Psoas muscle (tissue), 8 donors: ENCODE measurements at regions of chr10 and their contacts with region 1.

Region 1: DNA sequence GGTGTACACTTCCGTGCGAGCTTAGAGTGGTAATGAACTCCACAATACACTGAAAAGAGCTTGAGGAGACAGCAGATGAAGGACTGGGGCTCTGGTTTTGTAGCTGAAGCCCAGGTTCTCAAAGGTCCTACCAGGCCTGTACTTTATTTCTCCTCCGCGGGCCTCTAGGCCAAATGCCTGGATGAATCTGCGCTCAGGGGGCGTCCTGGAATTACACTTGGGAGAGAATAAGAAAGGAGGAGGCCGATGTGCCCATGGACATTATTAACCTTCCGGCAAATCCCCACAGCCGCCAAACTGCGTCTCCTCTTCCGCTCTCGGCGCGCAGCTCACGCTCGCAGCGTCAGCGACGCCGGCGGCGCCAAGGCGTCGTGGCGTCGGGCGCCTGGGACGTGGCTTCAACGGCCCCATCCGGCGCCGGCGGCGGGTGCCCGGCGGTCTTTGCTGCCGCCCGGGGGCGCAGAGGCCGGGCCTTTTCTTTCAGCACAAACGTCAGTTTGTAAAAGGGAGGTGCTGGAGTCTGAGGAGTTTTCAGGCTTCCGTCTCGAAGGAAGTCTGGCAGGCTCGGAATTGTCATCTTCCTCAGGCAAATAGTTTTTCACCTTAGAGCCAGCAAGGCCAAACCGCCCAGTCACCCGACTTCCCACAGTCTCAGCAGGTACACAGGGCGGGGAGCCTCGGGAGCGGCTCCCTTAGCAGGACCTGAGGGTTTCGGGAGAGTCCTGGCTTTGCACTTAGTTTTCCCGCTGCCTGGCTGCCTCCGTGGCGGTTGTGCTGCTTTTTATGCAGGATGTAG is at the start of gene CCDC7:
- DNase-seq: peak; percentile 89 to 93
- ATAC-seq: peak; percentile 97 to 98 (median 98)
- H3K4me3 ChIP-seq: peak within 1 kb of the TSS; percentile 73
- H3K27ac ChIP-seq: peak within 1 kb of the TSS; percentile 93
- H3K4me1 ChIP-seq: peaks cover 12% of the 10 kb centered on the region
- H3K27me3 ChIP-seq: no peaks in the 10 kb centered on the region
- CTCF ChIP-seq: peak; percentile 55
- total RNA-seq, gene CCDC7: 13.5 to 20.4 (median 16.7) TPM

Region 2: GRCh38 chr10:32378363-32379317 is 67.3 kb before region 1 on chr10:
- intact Hi-C with region 1: loop called (anchors 2 to 5 kb)
- DNase-seq: peak; percentile 95 to 96
- ATAC-seq: peak; percentile 95 to 98 (median 96)
- H3K4me3 ChIP-seq: peak overlapping the region; percentile 69
- H3K27ac ChIP-seq: peak overlapping the region; percentile 80
- H3K4me1 ChIP-seq: peaks cover 39% of the 10 kb centered on the region
- H3K27me3 ChIP-seq: no peaks in the 10 kb centered on the region
- CTCF ChIP-seq: no peak

Region 3: GRCh38 chr10:33041779-33042437 is 596.0 kb after region 1 on chr10:
- intact Hi-C with region 1: no loop called
- DNase-seq: no peak
- ATAC-seq: no peak
- H3K4me3 ChIP-seq: no peak overlapping the region
- H3K27ac ChIP-seq: no peak overlapping the region
- H3K4me1 ChIP-seq: no peaks in the 10 kb centered on the region
- H3K27me3 ChIP-seq: no peaks in the 10 kb centered on the region
- CTCF ChIP-seq: no peak